A673 (cell line): ENCODE measurements at regions of chr11 and their contacts with region 1.

Region 1: DNA sequence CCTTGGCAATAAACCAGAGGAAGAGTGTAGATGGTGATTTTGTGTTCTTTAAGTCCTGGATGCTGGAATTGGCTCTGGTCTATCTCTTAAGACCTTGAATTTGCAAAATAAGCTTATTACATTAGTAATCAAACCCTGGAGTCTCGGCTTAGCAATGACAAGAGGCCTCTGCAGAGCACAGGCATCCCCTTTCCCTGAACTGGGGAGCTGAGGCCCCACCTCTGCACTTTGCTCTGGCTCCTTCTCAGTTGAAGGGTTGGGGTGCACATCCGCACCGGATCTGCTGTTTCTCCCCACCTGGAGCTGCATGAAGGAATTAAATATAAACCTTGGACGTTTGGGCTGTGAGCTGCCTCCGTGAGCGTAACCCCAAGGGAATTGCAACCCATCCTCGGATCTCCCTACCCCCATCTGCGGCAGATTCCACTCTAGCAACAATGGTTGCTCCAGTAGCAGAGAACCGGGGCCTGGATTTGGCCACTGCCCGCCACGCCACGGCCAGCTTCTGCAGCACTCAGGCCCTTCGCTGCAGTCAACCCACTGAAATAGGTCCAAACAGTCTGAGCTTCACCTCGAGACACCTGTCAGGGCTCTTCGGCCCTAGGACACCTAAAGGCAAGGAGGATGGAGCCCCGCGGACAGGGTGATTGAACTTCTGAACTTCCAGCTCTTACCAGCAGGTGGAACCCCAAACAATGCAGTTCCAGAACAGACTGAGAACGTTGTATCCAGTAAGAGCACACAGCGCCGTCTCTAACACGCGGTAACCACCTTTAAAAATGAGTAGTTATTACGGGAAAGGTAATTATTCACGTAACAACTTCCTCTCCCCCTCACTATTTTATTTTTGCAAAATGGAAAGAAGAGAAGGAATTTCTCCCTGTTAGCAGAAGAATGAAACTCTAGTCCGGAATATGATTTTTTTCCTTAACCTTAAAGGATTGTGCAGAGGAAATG is 54.8 kb upstream of the CAPRIN1 start:
- DNase-seq: peak; percentile 96
- H3K4me3 ChIP-seq: peak overlapping the region; percentile 17
- H3K27ac ChIP-seq: peak overlapping the region; percentile 69
- H3K4me1 ChIP-seq: peaks cover 46% of the 10 kb centered on the region
- H3K27me3 ChIP-seq: no peaks in the 10 kb centered on the region
- CTCF ChIP-seq: peak; percentile 100

Region 2: DNA sequence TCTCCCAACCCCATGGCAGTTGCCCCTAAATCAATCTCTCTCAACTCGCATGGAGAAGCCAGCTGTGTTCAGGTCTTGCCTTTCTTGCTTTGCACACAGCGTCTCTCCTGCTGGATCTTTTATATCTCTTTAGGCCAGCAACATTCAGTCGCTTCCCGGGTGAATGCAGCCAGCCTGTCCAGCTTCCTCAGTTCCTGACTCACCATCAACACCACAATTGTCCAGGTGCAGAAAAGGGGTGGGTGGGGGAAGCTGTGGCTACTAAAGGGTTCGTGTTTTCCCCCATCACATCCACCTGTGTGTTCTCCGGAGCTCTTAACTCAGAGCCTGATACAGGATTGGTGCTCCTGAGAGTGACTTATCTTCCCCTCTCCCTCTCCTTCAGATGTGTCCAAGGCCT is 623.1 kb before region 1 on chr11:
- CTCF ChIA-PET with region 1: interaction called, 10 read pairs
- POLR2A ChIA-PET with region 1: no interaction called
- intact Hi-C with region 1: no loop called
- DNase-seq: no peak
- H3K4me3 ChIP-seq: no peak overlapping the region
- H3K27ac ChIP-seq: no peak overlapping the region
- H3K4me1 ChIP-seq: peaks cover 26% of the 10 kb centered on the region
- H3K27me3 ChIP-seq: peaks cover 22% of the 10 kb centered on the region
- CTCF ChIP-seq: no peak

Region 3: DNA sequence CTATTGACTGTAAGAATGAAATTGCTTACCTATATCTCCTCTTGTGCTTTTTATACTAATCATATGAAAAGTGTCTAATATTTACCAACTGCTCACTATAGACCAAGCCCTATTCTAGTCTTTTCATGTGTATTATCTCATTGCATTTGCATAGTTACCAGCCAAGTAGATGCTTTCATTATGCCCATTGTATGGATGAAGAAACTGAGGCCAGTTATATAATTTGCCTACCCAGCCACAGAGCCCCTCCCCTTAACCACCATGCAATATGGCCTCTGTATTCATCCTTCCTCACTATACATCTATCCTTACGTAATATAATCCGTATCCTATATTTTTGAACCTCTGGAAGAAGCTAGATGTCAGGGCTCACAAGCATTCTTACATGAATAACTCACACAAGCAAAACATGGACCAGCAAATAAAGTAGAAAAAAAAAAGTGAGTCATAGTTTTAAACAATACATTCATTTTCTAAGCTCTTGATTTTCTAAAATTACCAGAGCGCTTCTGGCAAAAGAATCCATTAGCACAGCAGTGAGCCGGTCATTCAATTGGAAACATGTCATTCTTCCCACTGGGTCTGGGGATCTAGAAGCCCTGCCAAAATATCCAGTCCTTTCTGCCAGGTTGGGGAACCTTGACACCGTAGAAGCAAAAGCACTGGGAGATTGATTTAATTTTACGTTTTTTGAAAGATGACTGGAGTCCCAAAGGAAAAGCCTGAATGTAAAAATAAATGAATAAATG is 376.2 kb before region 1 on chr11:
- CTCF ChIA-PET with region 1: no interaction called
- POLR2A ChIA-PET with region 1: no interaction called
- intact Hi-C with region 1: no loop called
- DNase-seq: peak; percentile 61
- H3K4me3 ChIP-seq: no peak overlapping the region
- H3K27ac ChIP-seq: no peak overlapping the region
- H3K4me1 ChIP-seq: no peaks in the 10 kb centered on the region
- H3K27me3 ChIP-seq: no peaks in the 10 kb centered on the region
- CTCF ChIP-seq: no peak

Region 4: DNA sequence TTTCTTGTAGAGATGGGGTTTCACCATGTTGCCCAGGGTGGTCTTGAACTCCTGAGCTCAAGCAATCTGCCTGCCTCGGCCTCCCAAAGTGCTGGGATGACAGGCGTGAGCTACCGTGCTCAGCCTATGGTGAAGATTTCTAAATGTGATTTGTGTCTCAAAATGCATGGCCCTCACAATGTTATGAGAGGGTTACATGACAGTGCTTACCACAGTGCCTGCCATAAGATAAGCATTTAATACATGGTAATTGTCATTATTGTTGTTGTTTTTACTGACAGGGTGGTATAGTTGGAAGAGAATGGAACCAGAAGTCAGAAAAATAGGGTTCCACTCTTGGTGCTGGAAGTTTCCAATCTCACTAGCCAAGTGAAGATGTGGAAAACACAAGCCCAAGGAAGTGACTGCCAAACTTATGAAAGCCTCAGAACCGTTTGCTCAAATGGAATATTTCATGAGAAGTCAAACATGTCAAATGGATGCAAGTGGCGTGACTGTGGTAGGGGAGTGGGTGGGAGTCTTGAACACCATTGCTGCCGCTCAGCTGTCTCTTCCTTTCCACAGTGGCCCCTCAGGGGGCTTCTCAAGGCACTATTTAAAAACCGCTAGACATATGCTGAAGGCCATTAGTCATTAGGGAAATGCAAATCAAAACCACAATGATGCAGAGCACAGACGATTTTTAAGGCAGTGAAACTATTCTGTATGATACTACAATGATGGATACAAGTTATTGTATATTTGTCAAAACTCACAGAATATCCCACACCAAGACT is 75.8 kb before region 1 on chr11:
- CTCF ChIA-PET with region 1: no interaction called
- POLR2A ChIA-PET with region 1: no interaction called
- intact Hi-C with region 1: no loop called
- DNase-seq: peak; percentile 46
- H3K4me3 ChIP-seq: no peak overlapping the region
- H3K27ac ChIP-seq: no peak overlapping the region
- H3K4me1 ChIP-seq: peaks cover 20% of the 10 kb centered on the region
- H3K27me3 ChIP-seq: no peaks in the 10 kb centered on the region
- CTCF ChIP-seq: no peak

Region 5: DNA sequence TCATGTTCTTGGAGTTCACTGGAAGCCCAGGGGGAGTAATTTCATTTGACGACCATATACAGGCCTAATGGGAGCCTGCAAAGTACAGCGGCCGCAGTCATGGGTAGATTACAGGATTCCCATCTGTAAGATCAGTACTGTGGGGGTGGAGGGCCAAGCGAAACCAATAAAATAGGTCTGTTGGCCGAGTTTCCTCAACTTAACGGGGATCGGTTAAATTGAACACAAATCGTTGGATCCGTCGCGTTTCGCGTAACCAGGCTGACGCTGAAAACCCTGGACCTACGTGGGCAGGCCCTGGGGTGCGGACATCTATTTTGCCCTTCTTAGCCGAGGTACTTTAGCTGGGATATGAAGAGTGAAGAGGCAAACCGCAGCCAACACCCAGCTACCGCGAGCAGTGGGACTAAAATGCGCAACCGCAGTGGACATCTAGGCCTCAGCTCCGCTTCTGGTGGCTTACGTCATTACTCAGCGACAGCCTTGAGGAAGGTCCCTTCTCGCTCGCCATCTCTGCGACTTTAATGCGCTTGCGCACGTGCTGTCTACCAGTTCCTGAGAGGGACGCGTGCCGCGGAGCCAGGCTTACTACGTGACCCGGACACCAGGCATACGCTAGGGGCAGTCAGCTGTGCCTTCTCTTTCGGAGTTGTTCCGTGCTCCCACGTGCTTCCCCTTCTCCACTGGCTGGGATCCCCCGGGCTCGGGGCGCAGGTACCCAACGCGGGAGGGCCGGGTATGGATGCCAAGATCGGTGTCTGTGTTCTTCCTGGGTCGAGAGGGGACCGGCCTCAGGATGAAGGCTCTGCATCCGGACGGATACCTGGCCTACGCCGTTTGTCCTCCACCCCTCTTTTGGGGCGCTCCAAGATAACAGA is 108.5 kb after region 1 on chr11 and contains the start of gene NAT10:
- CTCF ChIA-PET with region 1: no interaction called
- POLR2A ChIA-PET with region 1: interaction called, 3 read pairs
- intact Hi-C with region 1: loop called (anchors 1 kb)
- DNase-seq: peak; percentile 100
- H3K4me3 ChIP-seq: peak within 1 kb of the TSS; percentile 55
- H3K27ac ChIP-seq: peak within 1 kb of the TSS; percentile 93
- H3K4me1 ChIP-seq: peaks cover 42% of the 10 kb centered on the region
- H3K27me3 ChIP-seq: no peaks in the 10 kb centered on the region
- CTCF ChIP-seq: peak; percentile 30; the same call in 1 of the 2 replicates
- total RNA-seq, gene NAT10: 180 and 192 TPM in 2 replicates